Activated T-helper 1 cell treated with anti-CD3 and anti-CD28 coated beads, Interleukin-12 subunit alpha, Interleukin-12 subunit beta, Interleukin-2, Interleukin-4 antibody, amounts not matched to agents 30 ng/mL and 10 ng/mL and 1 ng/mL, durations not matched to agents 14 hours and 24 hours and 36 hours (primary cell): ENCODE measurements at regions of chr12 and their contacts with region 1.

Region 1: GRCh38 chr12:27014085-27014858 is at the start of gene TM7SF3:
- DNase-seq: peak; percentile 94
- H3K4me3 Mint-ChIP-seq: peak within 1 kb of the TSS; percentile 91
- H3K27ac Mint-ChIP-seq: peak within 1 kb of the TSS; percentile 90
- H3K4me1 Mint-ChIP-seq: peaks cover 61% of the 10 kb centered on the region
- H3K27me3 Mint-ChIP-seq: peaks cover 2% of the 10 kb centered on the region
- total RNA-seq, gene TM7SF3: 43.5 and 47.0 TPM in 2 replicates

Region 2: DNA sequence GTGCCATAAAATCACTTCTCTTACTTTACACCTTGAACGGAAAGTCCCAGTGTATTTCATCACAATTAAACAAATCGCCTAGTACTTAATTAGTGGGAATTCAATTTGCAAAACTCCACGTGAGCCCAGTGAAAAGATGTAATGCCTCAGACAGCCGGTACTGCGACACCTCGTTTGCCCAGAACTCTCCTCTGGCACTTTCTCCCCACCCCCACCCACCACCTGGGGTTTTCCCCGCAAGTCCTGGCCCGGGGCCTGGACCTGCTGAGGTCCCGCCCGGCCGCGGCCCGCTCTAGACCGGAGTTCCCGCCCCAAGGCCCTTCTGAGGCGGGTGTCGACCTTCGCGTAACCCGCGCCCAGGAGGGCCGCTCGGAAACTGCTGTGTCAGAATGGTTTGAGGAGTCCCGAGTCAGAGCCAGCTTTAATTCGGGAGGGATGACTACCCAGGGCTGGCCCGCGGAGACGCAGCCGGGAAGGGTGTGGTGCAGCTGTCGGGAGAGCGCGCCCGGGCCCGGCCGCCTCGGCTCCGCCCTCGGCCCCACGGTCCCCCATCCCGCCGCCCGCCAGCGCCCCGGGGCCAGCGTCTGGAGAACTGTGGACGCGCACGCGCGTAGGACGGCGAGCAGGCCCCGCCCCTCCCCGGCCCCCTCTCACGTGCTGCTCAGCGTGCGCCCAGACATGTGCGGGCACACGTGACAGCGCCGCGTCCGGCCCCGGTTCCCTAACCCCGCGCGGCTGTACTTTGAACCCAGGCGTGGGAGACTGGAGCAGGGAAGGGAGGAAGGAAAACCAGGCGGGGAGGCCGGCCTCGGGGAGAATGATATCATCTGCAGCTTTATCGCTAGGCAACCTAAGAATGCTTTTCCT is 900.2 kb before region 1 on chr12:
- intact Hi-C with region 1: loop called (anchors 10 kb)
- DNase-seq: peak; percentile 37
- H3K4me3 Mint-ChIP-seq: peak overlapping the region; percentile 76
- H3K27ac Mint-ChIP-seq: no peak overlapping the region
- H3K4me1 Mint-ChIP-seq: peaks cover 5% of the 10 kb centered on the region
- H3K27me3 Mint-ChIP-seq: peaks cover 72% of the 10 kb centered on the region

Region 3: GRCh38 chr12:26723379-26724308 is 290.6 kb before region 1 on chr12:
- intact Hi-C with region 1: no loop called
- DNase-seq: no peak
- H3K4me3 Mint-ChIP-seq: no peak overlapping the region
- H3K27ac Mint-ChIP-seq: no peak overlapping the region
- H3K4me1 Mint-ChIP-seq: peaks cover 27% of the 10 kb centered on the region
- H3K27me3 Mint-ChIP-seq: no peaks in the 10 kb centered on the region

Region 4: GRCh38 chr12:26853303-26854030 is 160.8 kb before region 1 on chr12:
- intact Hi-C with region 1: loop called (anchors 1 kb)
- DNase-seq: peak; percentile 50
- H3K4me3 Mint-ChIP-seq: no peak overlapping the region
- H3K27ac Mint-ChIP-seq: no peak overlapping the region
- H3K4me1 Mint-ChIP-seq: no peaks in the 10 kb centered on the region
- H3K27me3 Mint-ChIP-seq: peaks cover 14% of the 10 kb centered on the region

Region 5: GRCh38 chr12:26971963-26972362 is 42.3 kb before region 1 on chr12:
- intact Hi-C with region 1: loop called (anchors 1 kb)
- DNase-seq: peak; percentile 60
- H3K4me3 Mint-ChIP-seq: peak overlapping the region; percentile 24
- H3K27ac Mint-ChIP-seq: peak overlapping the region; percentile 74
- H3K4me1 Mint-ChIP-seq: peaks cover 24% of the 10 kb centered on the region
- H3K27me3 Mint-ChIP-seq: no peaks in the 10 kb centered on the region

Region 6: DNA sequence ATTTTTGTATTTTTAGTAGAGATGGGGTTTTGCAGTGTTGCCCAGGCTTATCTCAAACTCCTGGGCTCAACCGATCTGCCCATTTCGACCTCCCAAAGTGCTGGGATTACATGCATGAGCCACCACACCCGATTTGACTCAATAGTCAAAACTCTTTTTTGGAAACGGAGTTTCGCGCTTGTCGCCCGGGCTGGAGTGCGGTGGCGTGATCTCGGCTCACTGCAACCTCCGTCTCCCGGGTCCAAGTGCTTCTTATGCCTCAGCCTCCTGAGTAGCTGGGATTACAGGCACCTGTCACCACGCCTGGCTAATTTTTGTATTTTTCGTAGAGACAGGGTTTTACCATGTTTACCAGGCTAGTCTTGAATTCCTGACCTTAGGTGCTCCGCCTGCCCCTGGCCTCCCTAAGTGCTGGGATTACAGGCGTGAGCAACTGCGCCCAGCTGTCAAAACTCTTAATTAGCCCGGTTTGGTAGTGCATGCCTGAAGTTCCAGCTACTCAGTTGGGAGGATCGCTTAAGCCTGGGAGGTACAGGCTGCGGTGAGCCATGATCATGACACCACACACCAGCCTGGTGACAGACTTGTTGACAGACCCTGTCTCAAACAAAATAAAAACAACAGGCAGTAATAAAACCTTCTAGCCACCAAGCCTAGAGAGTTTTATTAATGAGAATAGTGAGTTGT is 20.5 kb after region 1 on chr12:
- intact Hi-C with region 1: no loop called
- DNase-seq: no peak
- H3K4me3 Mint-ChIP-seq: no peak overlapping the region
- H3K27ac Mint-ChIP-seq: no peak overlapping the region
- H3K4me1 Mint-ChIP-seq: no peaks in the 10 kb centered on the region
- H3K27me3 Mint-ChIP-seq: no peaks in the 10 kb centered on the region

Region 7: GRCh38 chr12:27243804-27244683 is 229.8 kb after region 1 on chr12 and contains the start of gene STK38L:
- intact Hi-C with region 1: loop called (anchors 1 kb)
- DNase-seq: peak; percentile 96
- H3K4me3 Mint-ChIP-seq: peak within 1 kb of the TSS; percentile 100
- H3K27ac Mint-ChIP-seq: peak within 1 kb of the TSS; percentile 99
- H3K4me1 Mint-ChIP-seq: peaks cover 60% of the 10 kb centered on the region
- H3K27me3 Mint-ChIP-seq: no peaks in the 10 kb centered on the region
- total RNA-seq, gene STK38L: 20.5 and 23.3 TPM in 2 replicates

Region 8: GRCh38 chr12:27703710-27704452 is 689.6 kb after region 1 on chr12:
- intact Hi-C with region 1: loop called (anchors 1 kb)
- DNase-seq: peak; percentile 62
- H3K4me3 Mint-ChIP-seq: no peak overlapping the region
- H3K27ac Mint-ChIP-seq: no peak overlapping the region
- H3K4me1 Mint-ChIP-seq: no peaks in the 10 kb centered on the region
- H3K27me3 Mint-ChIP-seq: peaks cover 11% of the 10 kb centered on the region